Posterior vena cava (tissue), 2 donors: ENCODE measurements at regions of chr4 and their contacts with region 1.

Region 1: DNA sequence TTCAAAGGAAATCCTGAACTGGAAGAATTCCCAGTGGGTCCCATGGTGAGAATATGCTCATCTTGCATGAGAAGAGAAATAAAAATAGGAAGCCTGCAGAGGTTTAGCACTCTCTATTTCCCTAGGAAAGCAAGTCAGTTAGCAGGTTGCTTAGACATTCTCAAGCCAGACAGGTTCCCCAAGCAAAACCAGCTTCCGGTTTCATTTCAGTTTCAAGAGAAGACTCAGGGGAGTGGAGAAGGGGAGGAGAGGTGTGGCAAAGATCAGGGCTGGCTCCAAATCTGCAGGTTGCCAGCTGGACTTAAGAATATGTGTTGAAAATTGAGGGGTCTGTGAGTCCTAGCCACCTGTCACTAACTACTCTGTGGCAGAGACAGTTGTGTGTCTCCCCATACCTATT is 107.5 kb downstream of the CLNK start:
- DNase-seq: no peak

Region 2: DNA sequence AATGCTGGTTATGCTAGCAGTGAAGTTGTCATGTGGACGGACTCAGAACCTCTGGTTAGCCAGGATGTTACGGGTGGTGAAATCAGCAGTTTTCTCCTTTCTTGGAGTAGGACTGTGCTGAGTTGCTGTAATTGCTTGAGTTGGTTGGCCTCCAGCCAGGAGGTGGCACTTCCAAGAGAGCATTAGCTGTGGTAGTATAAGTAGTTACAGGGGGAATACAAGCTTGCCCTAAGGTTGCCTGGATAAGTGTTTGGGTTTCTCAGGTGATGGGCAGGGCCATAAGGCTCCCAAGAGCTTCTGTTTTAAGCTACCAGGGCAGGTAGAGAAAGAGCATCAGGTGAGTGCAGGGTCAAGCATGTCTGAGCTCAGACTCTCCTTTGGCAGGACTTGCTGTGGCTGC is 222.8 kb before region 1 on chr4:
- intact Hi-C with region 1: no loop called
- DNase-seq: no peak

Region 3: DNA sequence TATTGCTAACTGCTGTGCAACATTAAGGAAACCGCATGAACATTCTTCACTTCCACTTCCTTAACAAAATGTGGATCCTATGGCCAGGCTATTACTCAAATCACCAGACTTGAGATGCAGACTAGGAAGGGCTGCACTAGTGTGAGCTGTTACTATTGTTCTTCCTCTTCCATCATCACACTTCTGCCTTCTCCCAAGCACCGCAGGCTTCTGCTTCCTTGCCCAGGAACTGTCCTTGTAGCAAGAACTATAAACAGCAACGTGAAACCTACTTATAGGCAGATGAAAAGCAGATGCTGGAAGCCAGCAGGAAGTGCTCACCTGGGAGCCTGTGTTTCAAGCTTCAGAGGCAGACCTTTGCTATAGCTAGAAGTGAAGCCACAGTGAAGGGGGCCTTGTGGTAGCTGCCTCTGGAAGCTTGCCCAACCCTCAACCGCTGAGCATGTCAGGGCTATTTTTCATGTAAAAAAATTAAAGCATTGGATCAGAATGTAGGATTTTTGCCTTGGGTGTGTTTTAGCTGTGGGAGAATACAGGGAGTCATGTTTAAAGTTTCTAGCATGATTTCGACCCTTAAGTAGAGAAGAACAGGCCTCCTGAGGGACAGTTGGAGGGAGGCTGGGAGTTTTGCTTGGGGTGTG is 63.7 kb after region 1 on chr4:
- intact Hi-C with region 1: no loop called
- DNase-seq: no peak

Region 4: GRCh38 chr4:11428899-11429698 is 852.1 kb after region 1 on chr4:
- intact Hi-C with region 1: loop called (anchors 5 to 10 kb)
- DNase-seq: peak; percentile 94